Activated CD4-positive, alpha-beta T cell treated with anti-CD3 and anti-CD28 coated beads for 36 hours (primary cell): ENCODE measurements at regions of chr12 and their contacts with region 1.

Region 1: DNA sequence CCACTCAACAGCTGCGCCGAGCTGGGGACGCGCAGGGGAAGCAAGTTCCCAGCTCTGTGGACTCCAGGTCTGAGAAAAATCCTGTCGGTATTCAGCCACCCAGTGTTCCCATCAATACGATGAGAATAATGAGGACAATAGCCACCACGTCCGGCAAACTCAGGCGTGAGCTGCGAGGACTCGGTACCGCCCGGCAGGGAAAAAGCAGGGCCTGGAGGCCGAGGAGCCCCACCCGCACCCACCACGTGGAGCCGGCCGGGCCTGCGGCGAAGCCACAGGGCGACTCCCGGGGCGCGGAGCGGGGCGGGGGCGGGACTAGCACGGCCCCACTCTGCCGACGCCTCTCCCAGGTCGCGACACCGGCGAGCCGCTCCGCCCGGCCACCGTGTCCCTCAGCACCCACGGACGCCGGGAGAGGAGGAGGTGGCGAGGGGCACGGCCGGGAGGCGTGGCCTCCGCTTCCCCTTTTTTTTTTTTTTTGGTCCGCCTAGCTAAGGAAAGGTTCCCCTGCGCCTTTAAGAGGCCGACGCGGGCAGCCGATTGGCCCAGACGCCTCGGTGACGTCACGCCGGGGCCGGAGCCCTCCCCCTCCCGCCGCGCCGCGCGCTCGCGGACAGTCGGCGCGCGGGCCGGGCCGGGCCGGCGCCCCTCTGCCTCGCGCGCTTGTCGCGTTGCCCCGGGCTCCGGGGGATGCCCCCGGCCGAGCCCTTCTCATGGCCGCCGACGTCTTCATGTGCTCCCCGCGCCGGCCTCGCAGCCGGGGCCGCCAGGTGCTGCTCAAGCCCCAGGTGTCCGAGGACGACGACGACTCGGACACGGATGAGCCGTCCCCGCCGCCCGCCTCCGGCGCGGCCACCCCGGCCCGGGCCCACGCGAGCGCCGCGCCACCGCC is at the start of gene MLXIP:
- DNase-seq: peak; percentile 94
- ATAC-seq: peak; percentile 68
- H3K4me3 Mint-ChIP-seq: peak within 1 kb of the TSS; percentile 76
- H3K27ac Mint-ChIP-seq: peak within 1 kb of the TSS; percentile 82
- H3K4me1 Mint-ChIP-seq: peaks cover 56% of the 10 kb centered on the region
- H3K27me3 Mint-ChIP-seq: no peaks in the 10 kb centered on the region
- total RNA-seq, gene MLXIP: 17.7 to 26.4 TPM

Region 2: GRCh38 chr12:121038861-121039666 is 1039.3 kb before region 1 on chr12 and contains the start of gene OASL:
- CTCF ChIA-PET with region 1: no interaction called
- POLR2A ChIA-PET with region 1: no interaction called
- intact Hi-C with region 1: loop called in 1 of 2 experiments (anchors 2 kb)
- DNase-seq: peak; percentile 72
- ATAC-seq: peak; percentile 58
- H3K4me3 Mint-ChIP-seq: peak within 1 kb of the TSS; percentile 78
- H3K27ac Mint-ChIP-seq: peak within 1 kb of the TSS; percentile 91
- H3K4me1 Mint-ChIP-seq: peaks cover 52% of the 10 kb centered on the region
- H3K27me3 Mint-ChIP-seq: peaks cover 14% of the 10 kb centered on the region
- total RNA-seq, gene OASL: 13.9 to 19.6 TPM

Region 3: DNA sequence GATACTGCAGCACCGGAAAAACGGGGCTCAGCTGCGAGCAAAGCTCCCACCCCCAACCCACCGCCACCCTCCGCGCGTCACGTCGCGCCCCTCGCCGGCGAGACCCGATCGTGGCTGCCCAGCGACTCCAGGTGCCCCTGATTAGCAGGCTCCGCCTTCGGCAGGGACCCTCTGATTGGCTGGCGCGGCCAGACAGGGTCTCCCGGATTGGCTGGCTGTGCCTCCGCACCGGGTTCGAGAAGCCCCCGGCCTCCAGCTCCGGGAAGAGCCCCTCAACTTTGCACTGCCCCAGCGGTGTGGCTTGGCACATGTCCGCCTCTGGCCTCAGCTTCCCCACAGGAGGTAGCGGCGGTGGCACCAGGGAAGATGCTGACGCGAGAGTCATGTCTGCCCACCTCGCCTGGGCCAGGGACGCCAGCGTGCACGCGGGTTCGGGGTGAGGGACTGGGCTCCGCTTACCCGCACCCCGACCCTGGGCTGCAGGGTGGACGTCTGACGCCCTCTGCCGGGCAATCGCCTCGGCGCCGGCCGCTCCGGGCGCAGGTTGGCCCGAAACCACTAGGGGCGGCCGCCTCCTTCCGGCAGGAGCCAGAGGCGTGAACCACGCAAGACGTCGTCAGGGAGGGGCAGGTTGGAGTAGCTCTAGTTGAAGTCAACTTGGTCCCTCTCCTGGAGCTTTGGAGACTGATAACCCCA is 284.4 kb before region 1 on chr12:
- CTCF ChIA-PET with region 1: no interaction called
- POLR2A ChIA-PET with region 1: no interaction called
- intact Hi-C with region 1: loop called in 1 of 2 experiments (anchors 5 kb)
- DNase-seq: peak; percentile 98
- ATAC-seq: peak; percentile 63
- H3K4me3 Mint-ChIP-seq: peak overlapping the region; percentile 96
- H3K27ac Mint-ChIP-seq: peak overlapping the region; percentile 92
- H3K4me1 Mint-ChIP-seq: peaks cover 56% of the 10 kb centered on the region
- H3K27me3 Mint-ChIP-seq: no peaks in the 10 kb centered on the region

Region 4: DNA sequence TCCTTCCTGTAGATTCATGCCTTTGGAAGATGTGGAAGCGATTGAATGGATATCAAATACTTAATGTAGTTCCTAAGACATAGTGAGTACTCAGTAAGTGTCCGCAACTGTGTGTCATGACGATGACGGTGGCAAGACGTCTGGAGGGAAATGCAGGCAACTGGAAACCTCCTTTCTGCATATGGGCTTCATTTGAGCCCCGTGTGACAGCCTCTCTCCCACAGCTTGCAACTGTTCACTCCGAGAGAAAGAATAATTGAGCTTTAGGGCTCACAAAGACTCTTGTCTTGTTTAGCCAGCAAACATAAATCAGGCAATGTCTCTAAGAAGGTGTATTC is 153.1 kb before region 1 on chr12:
- CTCF ChIA-PET with region 1: no interaction called
- POLR2A ChIA-PET with region 1: no interaction called
- intact Hi-C with region 1: no loop called
- DNase-seq: no peak
- ATAC-seq: no peak
- H3K4me3 Mint-ChIP-seq: no peak overlapping the region
- H3K27ac Mint-ChIP-seq: no peak overlapping the region
- H3K4me1 Mint-ChIP-seq: no peaks in the 10 kb centered on the region
- H3K27me3 Mint-ChIP-seq: no peaks in the 10 kb centered on the region

Region 5: GRCh38 chr12:122051231-122051876 is 27.0 kb before region 1 on chr12:
- CTCF ChIA-PET with region 1: interaction called, 7 read pairs
- POLR2A ChIA-PET with region 1: no interaction called
- intact Hi-C with region 1: loop called in 1 of 2 experiments (anchors 1 kb)
- DNase-seq: no peak
- ATAC-seq: no peak
- H3K4me3 Mint-ChIP-seq: no peak overlapping the region
- H3K27ac Mint-ChIP-seq: no peak overlapping the region
- H3K4me1 Mint-ChIP-seq: peaks cover 6% of the 10 kb centered on the region
- H3K27me3 Mint-ChIP-seq: no peaks in the 10 kb centered on the region

Region 6: DNA sequence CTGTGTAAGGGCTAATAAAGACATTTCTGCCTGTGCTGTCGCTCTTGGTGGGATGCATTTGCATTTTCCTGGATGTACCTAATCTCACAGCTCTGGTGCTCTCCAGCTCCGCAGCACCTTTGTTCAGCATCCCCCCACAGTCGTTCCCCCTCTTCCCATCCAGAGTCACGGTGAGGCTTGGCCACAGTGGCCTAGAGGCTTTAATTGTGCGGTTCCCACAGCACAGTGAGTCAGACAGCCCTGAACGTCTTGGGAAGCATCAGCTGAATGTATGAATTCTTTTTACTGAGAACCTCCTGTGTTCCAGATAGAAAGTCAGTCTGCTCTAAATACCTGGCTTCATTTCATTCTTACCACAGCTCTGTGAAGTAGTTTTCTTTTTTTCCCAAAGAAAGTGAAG is 28.9 kb after region 1 on chr12:
- CTCF ChIA-PET with region 1: interaction called, 8 read pairs
- POLR2A ChIA-PET with region 1: interaction called, 5 read pairs
- intact Hi-C with region 1: loop called (anchors 1 kb)
- DNase-seq: no peak
- ATAC-seq: no peak
- H3K4me3 Mint-ChIP-seq: no peak overlapping the region
- H3K27ac Mint-ChIP-seq: peak overlapping the region; percentile 63
- H3K4me1 Mint-ChIP-seq: peaks cover 82% of the 10 kb centered on the region
- H3K27me3 Mint-ChIP-seq: no peaks in the 10 kb centered on the region

Region 7: DNA sequence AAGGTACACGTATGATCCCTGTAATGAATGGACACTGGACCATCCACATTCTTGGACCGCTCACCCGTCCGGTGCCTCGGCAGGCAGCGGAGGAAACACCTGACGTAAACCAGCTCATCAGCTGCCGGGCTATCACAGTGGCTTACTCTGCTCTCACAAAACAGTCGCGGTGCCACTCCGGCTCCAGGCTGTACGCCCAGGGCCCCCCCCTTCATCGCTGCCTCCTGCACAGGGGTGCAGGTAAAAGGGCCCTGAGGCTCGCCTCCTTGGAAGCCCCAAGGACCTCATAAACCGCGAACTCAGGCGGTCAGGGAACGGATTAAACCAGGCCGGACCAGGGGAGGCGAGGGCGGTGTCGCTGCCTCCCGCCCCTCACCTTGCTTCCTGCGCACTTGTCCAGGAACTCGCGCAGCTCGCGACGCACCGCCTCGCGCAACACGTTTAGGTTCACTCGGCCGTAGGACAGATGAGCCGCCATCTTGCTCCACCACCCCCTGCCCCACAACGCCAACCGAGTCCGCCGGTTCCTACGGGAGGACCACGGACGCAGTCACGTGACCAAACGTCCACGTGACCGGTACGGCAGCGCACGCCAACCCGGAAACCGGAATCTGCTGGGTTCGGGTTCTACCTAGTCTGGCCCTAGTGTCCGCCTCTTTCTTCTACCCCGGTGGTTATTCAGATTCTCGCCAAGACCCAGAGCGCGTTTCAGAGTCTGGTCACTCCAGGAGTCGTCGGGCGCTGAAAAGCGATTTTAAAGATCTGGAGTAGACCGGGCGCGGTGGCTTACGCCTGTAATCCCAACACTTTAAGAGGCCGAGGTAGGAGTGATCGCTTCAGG is 187.8 kb after region 1 on chr12 and contains the start of gene VPS33A:
- CTCF ChIA-PET with region 1: no interaction called
- POLR2A ChIA-PET with region 1: no interaction called
- intact Hi-C with region 1: loop called in 1 of 2 experiments (anchors 1 kb)
- DNase-seq: peak; percentile 98
- ATAC-seq: peak; percentile 86
- H3K4me3 Mint-ChIP-seq: peak within 1 kb of the TSS; percentile 97
- H3K27ac Mint-ChIP-seq: peak within 1 kb of the TSS; percentile 98
- H3K4me1 Mint-ChIP-seq: peaks cover 23% of the 10 kb centered on the region
- H3K27me3 Mint-ChIP-seq: no peaks in the 10 kb centered on the region
- total RNA-seq, gene VPS33A: 24.8 to 26.4 TPM

Region 8: GRCh38 chr12:122602456-122602855 is 524.1 kb after region 1 on chr12:
- CTCF ChIA-PET with region 1: no interaction called
- POLR2A ChIA-PET with region 1: no interaction called
- intact Hi-C with region 1: no loop called
- DNase-seq: no peak
- ATAC-seq: no peak
- H3K4me3 Mint-ChIP-seq: no peak overlapping the region
- H3K27ac Mint-ChIP-seq: no peak overlapping the region
- H3K4me1 Mint-ChIP-seq: no peaks in the 10 kb centered on the region
- H3K27me3 Mint-ChIP-seq: no peaks in the 10 kb centered on the region

Region 9: DNA sequence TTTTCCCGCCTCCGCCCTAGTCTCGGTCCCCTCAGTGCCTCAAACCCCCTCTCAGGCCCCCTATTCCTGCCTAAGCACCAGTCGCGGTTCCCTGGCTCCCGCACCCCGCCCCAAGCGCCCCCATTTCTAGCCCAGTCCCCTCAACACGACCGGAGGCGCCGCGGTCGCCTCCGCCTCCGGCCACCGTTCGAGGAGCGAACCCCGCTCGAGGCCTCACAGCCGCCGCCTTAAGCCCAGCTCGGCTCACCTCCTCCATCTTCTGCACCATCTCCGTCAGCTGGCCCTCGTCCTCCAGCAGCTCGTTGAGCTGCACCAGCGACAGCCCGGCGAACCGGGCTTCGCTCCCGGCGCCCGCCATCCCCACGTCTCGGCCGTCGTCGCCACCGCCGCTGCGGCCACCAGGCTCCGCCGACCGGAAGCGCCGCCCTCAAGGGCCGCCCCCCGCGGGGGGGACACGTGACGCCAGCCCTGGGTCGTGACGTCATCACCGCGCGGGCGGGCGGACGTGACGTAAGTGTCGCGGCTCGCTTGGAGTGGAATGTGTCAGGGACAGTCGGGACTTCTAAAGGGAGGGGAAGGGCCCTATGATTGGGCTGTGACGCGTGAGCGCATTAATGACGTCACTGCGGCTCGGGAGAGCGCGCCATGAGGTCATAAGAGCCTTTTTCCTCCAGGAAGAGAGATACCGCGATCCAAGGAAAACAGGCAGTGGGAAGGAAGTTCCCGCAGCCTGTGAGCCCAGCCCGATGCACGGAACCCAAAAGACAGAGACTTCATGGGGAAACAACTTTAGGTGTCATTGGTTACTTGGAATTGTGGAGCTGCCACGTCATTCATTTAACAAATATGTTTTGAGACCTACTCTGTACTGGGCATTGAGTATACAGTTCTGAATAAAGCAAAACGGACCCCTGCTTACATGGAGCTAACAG is 817.6 kb after region 1 on chr12 and contains the start of gene VPS37B:
- CTCF ChIA-PET with region 1: no interaction called
- POLR2A ChIA-PET with region 1: no interaction called
- intact Hi-C with region 1: loop called in 1 of 2 experiments (anchors 10 kb)
- DNase-seq: peak; percentile 93
- ATAC-seq: peak; percentile 67
- H3K4me3 Mint-ChIP-seq: peak within 1 kb of the TSS; percentile 86
- H3K27ac Mint-ChIP-seq: peak within 1 kb of the TSS; percentile 87
- H3K4me1 Mint-ChIP-seq: peaks cover 87% of the 10 kb centered on the region
- H3K27me3 Mint-ChIP-seq: peaks cover 7% of the 10 kb centered on the region
- total RNA-seq, gene VPS37B: 9.4 to 11.4 TPM